ENCODE measurements at regions of chr1 and their contacts with region 1.

Region 1: DNA sequence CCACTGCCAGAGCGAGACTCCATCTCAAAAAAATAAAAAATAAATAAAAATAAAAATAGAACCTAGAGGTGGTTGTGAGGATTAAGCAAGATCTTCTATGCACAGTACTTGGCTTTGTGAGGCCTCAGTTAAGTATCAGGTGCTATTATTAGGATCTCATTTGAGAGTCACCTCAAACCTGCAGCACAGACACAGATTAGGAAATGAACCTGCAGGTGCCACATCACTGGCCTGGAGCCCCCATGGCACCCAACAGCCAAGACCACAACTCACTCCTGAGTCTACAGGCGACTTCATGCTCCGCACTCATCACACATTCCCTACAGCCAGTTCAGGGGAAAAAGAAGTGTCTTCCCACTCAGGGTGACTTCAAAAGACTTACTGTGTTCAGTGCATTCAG is 176.8 kb downstream of the SLC45A1 start:
- DNase-seq: no peak
- ATAC-seq: no peak
- H3K4me3 ChIP-seq: no peak overlapping the region
- H3K27ac ChIP-seq: no peak overlapping the region
- H3K4me1 ChIP-seq: peaks cover 15% of the 10 kb centered on the region
- H3K27me3 ChIP-seq: no peaks in the 10 kb centered on the region
- CTCF ChIP-seq: no peak

Region 2: DNA sequence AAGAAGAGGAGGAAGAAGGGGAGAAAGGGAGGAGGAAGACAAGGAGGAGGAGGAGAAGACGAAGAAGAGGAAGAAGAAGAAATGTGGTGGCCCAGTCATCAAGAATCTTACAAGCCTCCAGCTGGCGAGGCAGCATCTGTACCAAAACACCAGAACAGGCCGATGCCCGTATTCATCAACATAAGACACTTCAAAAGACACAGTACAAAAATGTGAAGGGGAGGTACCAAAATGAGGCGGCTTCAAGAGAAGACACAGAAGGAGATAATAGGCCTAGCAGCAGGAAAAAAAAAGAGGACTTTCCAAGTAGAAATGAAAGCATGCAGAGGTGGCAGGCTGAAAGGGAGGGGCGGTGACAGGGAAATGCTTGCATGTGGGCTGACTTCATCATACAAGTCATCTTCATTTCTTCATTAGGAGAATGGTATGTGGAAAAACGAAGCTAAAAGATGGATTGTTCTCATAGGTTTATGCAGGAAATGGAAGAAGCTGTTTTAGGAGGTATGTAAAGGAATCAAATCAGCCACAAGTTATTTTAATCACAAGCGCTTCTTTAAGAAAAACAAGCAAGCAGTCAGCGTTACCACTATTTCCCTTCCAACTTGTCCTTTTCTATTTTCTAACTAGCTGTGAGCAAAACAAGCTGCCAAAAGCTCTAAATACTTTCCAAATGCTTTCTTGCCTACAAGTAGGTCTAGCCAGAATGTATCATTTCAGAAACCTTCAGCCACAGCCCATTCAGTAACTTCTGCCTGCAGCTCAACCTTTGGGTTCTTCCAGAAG is 15.6 kb after region 1 on chr1:
- CTCF ChIA-PET with region 1: no interaction called
- POLR2A ChIA-PET with region 1: no interaction called
- intact Hi-C with region 1: no loop called
- DNase-seq: no peak
- ATAC-seq: no peak
- H3K4me3 ChIP-seq: no peak overlapping the region
- H3K27ac ChIP-seq: no peak overlapping the region
- H3K4me1 ChIP-seq: no peaks in the 10 kb centered on the region
- H3K27me3 ChIP-seq: no peaks in the 10 kb centered on the region
- CTCF ChIP-seq: no peak

Region 3: GRCh38 chr1:8525558-8526275 is 31.0 kb after region 1 on chr1:
- CTCF ChIA-PET with region 1: no interaction called
- POLR2A ChIA-PET with region 1: no interaction called
- intact Hi-C with region 1: loop called (anchors 5 kb)
- DNase-seq: peak; percentile 70
- ATAC-seq: peak; percentile 96
- H3K4me3 ChIP-seq: peak overlapping the region; percentile 58
- H3K27ac ChIP-seq: peak overlapping the region; percentile 67
- H3K4me1 ChIP-seq: peaks cover 23% of the 10 kb centered on the region
- H3K27me3 ChIP-seq: no peaks in the 10 kb centered on the region
- CTCF ChIP-seq: no peak

Measured in PC-3 (cell line).